Vagina (tissue), 2 donors: ENCODE measurements at regions of chr1 and their contacts with region 1.

Region 1: GRCh38 chr1:193504920-193505319 is 318.5 kb upstream of the B3GALT2 start:
- DNase-seq: no peak
- H3K4me3 ChIP-seq: no peak overlapping the region
- H3K27ac ChIP-seq: no peak overlapping the region
- H3K4me1 ChIP-seq: no peaks in the 10 kb centered on the region
- H3K27me3 ChIP-seq: no peaks in the 10 kb centered on the region
- CTCF ChIP-seq: no peak
- POLR2A ChIP-seq: no peak

Region 2: GRCh38 chr1:194355488-194356106 is 850.7 kb after region 1 on chr1:
- intact Hi-C with region 1: loop called (anchors 5 kb)
- DNase-seq: no peak
- H3K4me3 ChIP-seq: no peak overlapping the region
- H3K27ac ChIP-seq: no peak overlapping the region
- H3K4me1 ChIP-seq: no peaks in the 10 kb centered on the region
- H3K27me3 ChIP-seq: no peaks in the 10 kb centered on the region
- CTCF ChIP-seq: no peak
- POLR2A ChIP-seq: no peak